ENCODE measurements at regions of chr14 and their contacts with region 1.

Region 1: DNA sequence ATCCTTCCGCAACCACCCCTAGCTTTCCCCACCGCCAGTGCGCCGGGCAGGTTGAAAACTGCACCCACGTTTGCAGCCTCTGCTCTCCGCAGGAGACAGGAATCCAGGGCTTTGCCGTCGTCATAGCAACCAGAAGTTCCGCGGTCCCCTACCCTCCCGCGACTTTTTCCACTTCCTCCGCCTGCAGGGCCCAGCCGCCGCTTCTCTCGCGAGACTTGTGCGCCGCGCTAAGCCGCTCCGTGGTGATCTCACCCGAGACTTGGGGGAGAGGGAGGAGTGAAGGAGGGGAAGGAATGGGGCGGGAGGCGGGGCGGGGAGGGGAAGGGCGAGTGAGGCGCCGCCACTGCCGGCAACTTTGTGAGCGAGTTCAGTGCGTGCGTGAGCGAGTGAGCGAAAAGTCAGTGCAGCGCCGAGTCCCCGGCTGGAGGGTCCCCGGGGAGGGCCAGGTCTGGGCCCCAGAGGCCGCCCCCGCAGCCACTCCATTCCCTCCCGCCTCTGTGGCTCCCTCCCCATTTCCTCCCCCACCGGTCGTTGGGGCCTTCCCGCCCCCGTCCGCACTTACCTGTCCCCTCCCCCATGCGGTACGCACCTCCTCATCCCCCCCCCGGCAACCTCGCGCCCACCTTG is 413.0 kb downstream of the PCNX1 start:
- DNase-seq: peak; percentile 94 to 99 (median 98)
- ATAC-seq: peak; percentile 92
- H3K4me3 ChIP-seq: peak within 1 kb of the TSS; percentile 69
- H3K4me3 Mint-ChIP-seq: peak within 1 kb of the TSS; percentile 90 to 95 (median 94)
- H3K27ac ChIP-seq: peak within 1 kb of the TSS; percentile 94
- H3K27ac Mint-ChIP-seq: peak within 1 kb of the TSS; percentile 88 to 98 (median 95)
- H3K4me1 ChIP-seq: peaks cover 6 to 36% of the 10 kb centered on the region in 2 donors
- H3K4me1 Mint-ChIP-seq: peaks cover 28 to 48% (median 47%) of the 10 kb centered on the region in 7 donors
- H3K27me3 ChIP-seq: no peaks in the 10 kb centered on the region
- H3K27me3 Mint-ChIP-seq: peaks cover 0 to 3% (median 0%) of the 10 kb centered on the region in 5 donors

Region 2: GRCh38 chr14:70655110-70655826 is 665.0 kb before region 1 on chr14:
- CTCF ChIA-PET with region 1: no interaction called
- POLR2A ChIA-PET with region 1: no interaction called
- intact Hi-C with region 1: loop called in 1 of 2 experiments (anchors 5 kb)
- DNase-seq: peak; percentile 29 to 93 (median 91)
- ATAC-seq: peak; percentile 95
- H3K4me3 ChIP-seq: peak overlapping the region; percentile 43
- H3K4me3 Mint-ChIP-seq: peak overlapping the region; percentile 76 to 89 (median 85)
- H3K27ac ChIP-seq: peak overlapping the region; percentile 84
- H3K27ac Mint-ChIP-seq: peak overlapping the region; percentile 94 to 99 (median 98)
- H3K4me1 ChIP-seq: peaks cover 60 to 83% of the 10 kb centered on the region in 2 donors
- H3K4me1 Mint-ChIP-seq: peaks cover 66 to 98% (median 94%) of the 10 kb centered on the region in 7 donors
- H3K27me3 ChIP-seq: no peaks in the 10 kb centered on the region
- H3K27me3 Mint-ChIP-seq: no peaks in the 10 kb centered on the region

Region 3: GRCh38 chr14:71242237-71242748 is 77.9 kb before region 1 on chr14:
- CTCF ChIA-PET with region 1: no interaction called
- POLR2A ChIA-PET with region 1: no interaction called
- intact Hi-C with region 1: loop called in 1 of 2 experiments (anchors 2 kb)
- DNase-seq: no peak
- ATAC-seq: no peak
- H3K4me3 ChIP-seq: no peak overlapping the region
- H3K4me3 Mint-ChIP-seq: no peak overlapping the region
- H3K27ac ChIP-seq: no peak overlapping the region
- H3K27ac Mint-ChIP-seq: peak overlapping the region in 2 of 9 donors; percentile 26 to 65
- H3K4me1 ChIP-seq: peaks cover 19 to 20% of the 10 kb centered on the region in 2 donors
- H3K4me1 Mint-ChIP-seq: peaks cover 19 to 52% (median 19%) of the 10 kb centered on the region in 7 donors
- H3K27me3 ChIP-seq: no peaks in the 10 kb centered on the region
- H3K27me3 Mint-ChIP-seq: peaks cover 0 to 4% (median 0%) of the 10 kb centered on the region in 5 donors

Region 4: GRCh38 chr14:71300566-71301330 is 19.5 kb before region 1 on chr14:
- CTCF ChIA-PET with region 1: no interaction called
- POLR2A ChIA-PET with region 1: no interaction called
- intact Hi-C with region 1: no loop called
- DNase-seq: no peak
- ATAC-seq: no peak
- H3K4me3 ChIP-seq: no peak overlapping the region
- H3K4me3 Mint-ChIP-seq: no peak overlapping the region
- H3K27ac ChIP-seq: no peak overlapping the region
- H3K27ac Mint-ChIP-seq: no peak overlapping the region
- H3K4me1 ChIP-seq: no peaks in the 10 kb centered on the region
- H3K4me1 Mint-ChIP-seq: peaks cover 0 to 17% (median 0%) of the 10 kb centered on the region in 7 donors
- H3K27me3 ChIP-seq: no peaks in the 10 kb centered on the region
- H3K27me3 Mint-ChIP-seq: peaks cover 0 to 6% (median 0%) of the 10 kb centered on the region in 5 donors

Region 5: DNA sequence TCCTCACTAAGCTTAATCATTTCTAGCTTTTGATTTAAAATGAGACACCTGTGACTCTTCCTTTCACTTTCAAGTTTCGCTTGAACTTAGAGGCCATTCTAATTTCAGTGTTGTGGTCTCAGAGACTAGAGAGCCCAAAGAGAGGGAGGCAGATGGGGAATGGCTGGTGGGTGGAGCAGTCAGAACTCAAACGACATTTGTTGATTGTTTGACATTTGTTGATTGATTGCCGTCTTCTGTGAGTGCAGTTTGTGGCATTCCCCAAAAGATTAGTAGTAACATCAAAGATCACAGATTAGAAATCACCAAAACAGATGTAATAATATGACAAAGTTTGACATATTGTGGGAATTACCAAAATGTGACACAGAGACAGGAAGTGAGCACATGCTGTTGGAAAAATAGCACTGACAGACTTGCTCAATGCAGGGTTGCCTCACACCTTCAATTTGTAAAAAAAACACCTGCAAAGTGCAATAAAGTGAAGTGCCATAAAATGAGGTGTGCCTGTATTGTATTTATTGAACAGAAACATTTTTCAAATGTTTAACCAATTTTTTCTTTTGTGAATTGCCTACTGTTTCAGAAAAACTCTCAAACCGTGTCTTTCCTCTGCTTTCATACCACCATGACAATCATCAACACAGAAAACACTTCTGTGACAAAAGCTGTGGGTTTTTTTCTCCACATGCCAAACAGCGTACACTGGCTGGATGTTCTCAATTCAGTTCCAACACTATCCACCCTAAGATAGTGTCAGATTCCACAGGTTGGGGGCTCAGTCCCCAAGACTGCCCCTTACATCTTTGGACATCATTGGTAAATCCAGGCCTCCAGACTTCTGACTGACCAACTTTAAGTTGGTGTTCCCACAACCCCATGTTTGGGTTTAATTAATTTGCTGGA is 235.7 kb after region 1 on chr14:
- CTCF ChIA-PET with region 1: no interaction called
- POLR2A ChIA-PET with region 1: interaction called, 3 read pairs
- intact Hi-C with region 1: loop called (anchors 1 kb)
- DNase-seq: peak; percentile 8 to 81 (median 54)
- ATAC-seq: peak; percentile 92
- H3K4me3 ChIP-seq: peak overlapping the region; percentile 43
- H3K4me3 Mint-ChIP-seq: peak overlapping the region; percentile 70 to 88 (median 82)
- H3K27ac ChIP-seq: peak overlapping the region; percentile 82
- H3K27ac Mint-ChIP-seq: peak overlapping the region; percentile 91 to 99 (median 94)
- H3K4me1 ChIP-seq: peaks cover 30 to 43% of the 10 kb centered on the region in 2 donors
- H3K4me1 Mint-ChIP-seq: peaks cover 37 to 85% (median 68%) of the 10 kb centered on the region in 7 donors
- H3K27me3 ChIP-seq: no peaks in the 10 kb centered on the region
- H3K27me3 Mint-ChIP-seq: no peaks in the 10 kb centered on the region

Region 6: DNA sequence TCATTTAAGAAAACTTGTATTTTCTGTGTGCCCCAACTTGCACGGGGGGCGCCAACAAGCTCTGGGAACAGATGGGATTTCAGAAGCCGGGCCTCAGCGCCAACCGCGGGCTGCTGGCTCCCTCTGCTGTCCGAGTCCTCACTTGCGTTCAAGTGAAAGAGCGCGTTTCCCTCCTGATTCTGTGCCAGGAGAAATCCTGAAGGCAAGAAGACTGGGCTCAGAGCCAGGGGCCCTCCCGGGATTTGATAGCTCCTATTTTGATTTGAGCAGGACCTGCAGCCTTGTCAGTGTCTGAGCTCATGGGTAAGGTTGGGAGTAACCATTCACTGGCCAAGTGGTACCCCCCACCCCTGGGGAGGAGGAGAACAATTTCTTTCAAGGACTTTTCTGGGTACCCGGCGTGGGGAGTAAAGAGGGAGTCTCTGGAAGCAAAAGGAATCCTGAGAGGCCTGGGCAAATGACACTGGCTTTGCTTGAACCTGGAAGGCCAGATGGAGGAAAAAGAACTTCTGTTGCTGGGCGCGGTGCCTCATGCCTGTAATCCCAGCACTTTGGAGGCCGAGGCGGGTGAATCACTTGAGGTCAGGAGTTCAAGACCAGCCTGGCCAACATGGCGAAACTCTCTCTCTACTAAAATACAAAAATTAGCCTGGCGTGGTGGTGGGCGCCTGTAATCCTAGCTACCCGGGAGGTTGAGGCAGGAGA is 433.1 kb after region 1 on chr14:
- CTCF ChIA-PET with region 1: interaction called, 3 read pairs
- POLR2A ChIA-PET with region 1: interaction called, 3 read pairs
- intact Hi-C with region 1: loop called (anchors 1 kb)
- DNase-seq: peak; percentile 29 to 67 (median 57)
- ATAC-seq: peak; percentile 66
- H3K4me3 ChIP-seq: no peak overlapping the region
- H3K4me3 Mint-ChIP-seq: peak overlapping the region in 3 of 10 donors; percentile 3 to 34 (median 21)
- H3K27ac ChIP-seq: no peak overlapping the region
- H3K27ac Mint-ChIP-seq: no peak overlapping the region
- H3K4me1 ChIP-seq: no peaks in the 10 kb centered on the region
- H3K4me1 Mint-ChIP-seq: peaks cover 0 to 18% (median 0%) of the 10 kb centered on the region in 7 donors
- H3K27me3 ChIP-seq: no peaks in the 10 kb centered on the region
- H3K27me3 Mint-ChIP-seq: peaks cover 0 to 5% (median 0%) of the 10 kb centered on the region in 5 donors

Region 7: GRCh38 chr14:73058224-73058921 is 1738.2 kb after region 1 on chr14 and contains the start of gene RBM25:
- CTCF ChIA-PET with region 1: no interaction called
- POLR2A ChIA-PET with region 1: no interaction called
- intact Hi-C with region 1: loop called in 1 of 2 experiments (anchors 1 kb)
- DNase-seq: peak; percentile 85 to 98 (median 96)
- ATAC-seq: peak; percentile 99
- H3K4me3 ChIP-seq: peak within 1 kb of the TSS; percentile 77
- H3K4me3 Mint-ChIP-seq: no peak within 1 kb of the TSS
- H3K27ac ChIP-seq: peak within 1 kb of the TSS; percentile 92
- H3K27ac Mint-ChIP-seq: no peak within 1 kb of the TSS
- H3K4me1 ChIP-seq: peaks cover 30 to 36% of the 10 kb centered on the region in 2 donors
- H3K4me1 Mint-ChIP-seq: peaks cover 19 to 45% (median 30%) of the 10 kb centered on the region in 7 donors
- H3K27me3 ChIP-seq: no peaks in the 10 kb centered on the region
- H3K27me3 Mint-ChIP-seq: no peaks in the 10 kb centered on the region
- total RNA-seq, gene RBM25: 111 to 168 (median 146) TPM

Measured in naive thymus-derived CD4-positive, alpha-beta T cell (primary cell).